Activated CD8-positive, alpha-beta memory T cell treated with anti-CD3 and anti-CD28 coated beads, Interleukin-2, amount 10 ng/mL, durations not matched to agents 7 days and 5 days (primary cell): ENCODE measurements at regions of chr7 and their contacts with region 1.

Region 1: DNA sequence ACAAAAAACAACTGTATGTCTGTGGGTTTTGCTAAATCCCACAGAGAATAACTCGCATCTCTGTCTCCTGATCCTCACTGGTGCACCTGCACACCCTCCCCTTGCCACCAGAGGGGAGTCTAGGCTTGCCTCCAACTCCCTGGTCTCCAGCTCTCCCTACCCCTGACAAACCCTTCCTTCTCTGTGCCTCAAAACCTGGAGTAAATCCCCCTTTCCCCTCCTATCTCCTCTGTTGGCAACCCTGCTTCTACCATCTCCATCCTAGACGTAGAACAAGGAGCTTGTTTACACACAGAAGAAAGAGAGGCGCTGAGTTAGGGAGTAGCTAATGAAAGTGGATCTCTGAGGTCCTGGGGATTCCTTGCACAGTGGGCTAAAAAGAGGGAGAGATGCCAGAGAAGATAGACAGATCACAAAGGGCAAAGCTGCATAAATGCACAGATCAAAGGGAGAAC is 6.0 kb downstream of the MBLAC1 start:
- DNase-seq: peak; percentile 78
- ATAC-seq: peak; percentile 81
- H3K4me3 Mint-ChIP-seq: no peak overlapping the region
- H3K27ac Mint-ChIP-seq: no peak overlapping the region
- H3K4me1 Mint-ChIP-seq: peaks cover 30% of the 10 kb centered on the region
- H3K27me3 Mint-ChIP-seq: no peaks in the 10 kb centered on the region

Region 2: GRCh38 chr7:99975782-99976521 is 156.8 kb before region 1 on chr7 and contains the start of gene AZGP1:
- CTCF ChIA-PET with region 1: interaction called, 11 read pairs
- DNase-seq: no peak
- ATAC-seq: no peak
- H3K4me3 Mint-ChIP-seq: no peak within 1 kb of the TSS
- H3K27ac Mint-ChIP-seq: no peak within 1 kb of the TSS
- H3K4me1 Mint-ChIP-seq: no peaks in the 10 kb centered on the region
- H3K27me3 Mint-ChIP-seq: peaks cover 29% of the 10 kb centered on the region
- total RNA-seq, gene AZGP1: not detected

Region 3: DNA sequence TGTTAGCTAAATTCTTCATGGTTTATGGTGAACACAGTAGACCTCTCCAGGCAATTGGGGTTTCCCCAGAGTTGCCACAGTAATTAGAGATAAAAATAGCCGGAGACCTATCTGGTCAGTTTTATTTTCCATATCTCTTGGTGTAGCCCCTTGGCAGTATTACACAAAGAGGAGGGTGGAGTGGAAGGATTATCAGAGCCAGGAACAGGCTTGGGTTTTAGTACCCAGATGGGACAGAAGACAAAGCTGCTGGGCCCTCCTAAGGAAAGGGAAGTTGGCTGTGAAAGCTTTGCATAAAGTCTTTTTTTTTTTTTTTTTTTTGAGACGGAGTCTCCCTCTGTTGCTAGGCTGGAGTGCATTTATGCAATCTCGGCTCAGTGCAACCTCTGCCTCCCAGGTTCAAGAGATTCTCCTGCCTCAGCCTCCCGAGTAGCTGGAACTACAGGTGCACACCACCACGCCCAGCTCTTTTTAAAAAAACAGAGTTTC is 73.4 kb before region 1 on chr7:
- CTCF ChIA-PET with region 1: no interaction called
- DNase-seq: no peak
- ATAC-seq: no peak
- H3K4me3 Mint-ChIP-seq: no peak overlapping the region
- H3K27ac Mint-ChIP-seq: no peak overlapping the region
- H3K4me1 Mint-ChIP-seq: no peaks in the 10 kb centered on the region
- H3K27me3 Mint-ChIP-seq: no peaks in the 10 kb centered on the region

Region 4: GRCh38 chr7:100088621-100089457 is 43.9 kb before region 1 on chr7 and contains the start of gene COPS6:
- CTCF ChIA-PET with region 1: interaction called, 20 read pairs
- DNase-seq: peak; percentile 85
- ATAC-seq: peak; percentile 78
- H3K4me3 Mint-ChIP-seq: peak within 1 kb of the TSS; percentile 86
- H3K27ac Mint-ChIP-seq: peak within 1 kb of the TSS; percentile 88
- H3K4me1 Mint-ChIP-seq: peaks cover 47% of the 10 kb centered on the region
- H3K27me3 Mint-ChIP-seq: no peaks in the 10 kb centered on the region
- total RNA-seq, gene COPS6: 81.2 to 90.8 TPM

Region 5: GRCh38 chr7:100158229-100159098 is 25.7 kb after region 1 on chr7 and contains the start of gene TRAPPC14:
- CTCF ChIA-PET with region 1: interaction called, 61 read pairs
- DNase-seq: peak; percentile 94
- ATAC-seq: peak; percentile 94
- H3K4me3 Mint-ChIP-seq: peak within 1 kb of the TSS; percentile 75
- H3K27ac Mint-ChIP-seq: peak within 1 kb of the TSS; percentile 78
- H3K4me1 Mint-ChIP-seq: peaks cover 48% of the 10 kb centered on the region
- H3K27me3 Mint-ChIP-seq: no peaks in the 10 kb centered on the region
- total RNA-seq, gene TRAPPC14: 36.8 to 43.5 TPM

Region 6: DNA sequence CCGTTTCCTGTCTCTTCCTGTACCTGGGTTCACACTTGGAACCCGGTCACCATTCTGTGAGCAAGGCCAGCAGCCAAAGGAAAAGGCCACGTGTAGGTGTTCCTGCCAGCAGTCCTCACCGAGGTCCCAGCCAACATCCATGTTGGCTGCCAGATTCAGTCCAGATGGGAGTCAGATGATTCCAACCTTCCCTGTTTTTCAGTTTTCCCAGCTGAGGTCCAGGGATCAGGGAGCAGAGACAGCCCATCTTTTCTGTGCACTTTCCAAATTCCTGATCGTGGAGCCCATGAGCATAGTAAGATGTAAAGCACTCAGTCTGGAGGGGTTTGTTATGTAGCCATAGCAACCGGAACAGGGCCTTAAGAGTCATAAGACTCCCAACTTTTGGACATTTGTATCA is 83.2 kb after region 1 on chr7:
- CTCF ChIA-PET with region 1: interaction called, 51 read pairs
- DNase-seq: no peak
- ATAC-seq: no peak
- H3K4me3 Mint-ChIP-seq: no peak overlapping the region
- H3K27ac Mint-ChIP-seq: peak overlapping the region; percentile 28
- H3K4me1 Mint-ChIP-seq: peaks cover 51% of the 10 kb centered on the region
- H3K27me3 Mint-ChIP-seq: no peaks in the 10 kb centered on the region

Region 7: DNA sequence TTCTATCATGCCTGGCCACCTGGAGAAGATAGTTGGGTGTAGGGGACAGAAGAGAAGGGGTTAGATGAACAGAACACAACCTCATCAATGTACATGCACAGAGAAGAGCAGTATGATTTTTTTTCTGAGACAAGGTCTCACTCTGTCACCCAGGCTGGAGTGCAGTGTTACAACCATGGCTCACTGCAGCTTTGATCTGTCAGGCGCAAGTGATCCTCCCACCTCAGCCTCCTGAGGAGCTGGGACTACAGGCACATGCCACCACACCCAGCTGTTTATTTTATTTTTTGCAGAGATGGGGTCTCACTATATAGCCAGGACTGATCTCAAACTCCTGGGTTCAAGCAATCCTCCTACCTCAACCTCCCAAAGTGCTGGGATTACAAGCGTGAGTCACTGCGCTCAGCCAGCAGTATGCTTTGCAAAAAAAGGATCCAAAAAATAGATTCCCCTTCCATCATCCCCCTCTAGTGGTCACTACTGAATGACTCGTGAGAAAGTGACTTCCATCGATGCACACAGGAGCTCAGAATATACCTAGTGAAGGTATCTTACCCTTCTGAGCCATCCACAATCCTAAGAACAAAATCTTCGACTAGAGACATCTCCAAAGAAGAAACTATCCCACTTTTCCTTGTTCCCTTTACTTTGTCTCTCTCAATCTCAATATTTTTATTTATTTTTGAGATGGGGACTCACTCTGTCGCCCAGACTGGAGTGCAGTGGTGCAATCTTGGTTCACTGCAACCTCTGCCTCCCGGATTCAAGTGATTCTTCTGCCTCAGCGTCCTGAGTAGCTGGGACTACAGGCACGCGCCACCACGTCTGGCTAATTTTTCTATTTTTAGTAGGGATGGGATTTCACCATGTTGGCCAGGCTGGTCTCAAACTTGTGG is 274.8 kb after region 1 on chr7:
- CTCF ChIA-PET with region 1: interaction called, 23 read pairs
- DNase-seq: peak; percentile 59
- ATAC-seq: peak; percentile 91
- H3K4me3 Mint-ChIP-seq: no peak overlapping the region
- H3K27ac Mint-ChIP-seq: no peak overlapping the region
- H3K4me1 Mint-ChIP-seq: peaks cover 9% of the 10 kb centered on the region
- H3K27me3 Mint-ChIP-seq: peaks cover 18% of the 10 kb centered on the region